Caco-2 (cell line): ENCODE measurements at regions of chr12 and their contacts with region 1.

Region 1: GRCh38 chr12:1939801-1940607 is 21.6 kb upstream of the CACNA2D4 start:
- DNase-seq: peak; percentile 84 to 91
- H3K4me3 ChIP-seq: no peak overlapping the region
- H3K4me3 Mint-ChIP-seq: no peak overlapping the region
- H3K27ac Mint-ChIP-seq: no peak overlapping the region
- H3K4me1 ChIP-seq: no peaks in the 10 kb centered on the region
- H3K4me1 Mint-ChIP-seq: no peaks in the 10 kb centered on the region
- H3K27me3 ChIP-seq: no peaks in the 10 kb centered on the region
- H3K27me3 Mint-ChIP-seq: no peaks in the 10 kb centered on the region
- CTCF ChIP-seq: peak; percentile 98 to 99

Region 2: GRCh38 chr12:1650260-1650977 is 289.6 kb before region 1 on chr12:
- CTCF ChIA-PET with region 1: interaction called, 25 read pairs
- POLR2A ChIA-PET with region 1: no interaction called
- intact Hi-C with region 1: loop called (anchors 5 kb)
- DNase-seq: no peak
- H3K4me3 ChIP-seq: no peak overlapping the region
- H3K4me3 Mint-ChIP-seq: no peak overlapping the region
- H3K27ac Mint-ChIP-seq: no peak overlapping the region
- H3K4me1 ChIP-seq: no peaks in the 10 kb centered on the region
- H3K4me1 Mint-ChIP-seq: no peaks in the 10 kb centered on the region
- H3K27me3 ChIP-seq: no peaks in the 10 kb centered on the region
- H3K27me3 Mint-ChIP-seq: no peaks in the 10 kb centered on the region
- CTCF ChIP-seq: no peak

Region 3: GRCh38 chr12:1698638-1699214 is 241.3 kb before region 1 on chr12:
- CTCF ChIA-PET with region 1: no interaction called
- POLR2A ChIA-PET with region 1: no interaction called
- intact Hi-C with region 1: loop called (anchors 5 kb)
- DNase-seq: peak; percentile 69 to 74
- H3K4me3 ChIP-seq: no peak overlapping the region
- H3K4me3 Mint-ChIP-seq: no peak overlapping the region
- H3K27ac Mint-ChIP-seq: peak overlapping the region; percentile 26
- H3K4me1 ChIP-seq: peaks cover 45% of the 10 kb centered on the region
- H3K4me1 Mint-ChIP-seq: peaks cover 25% of the 10 kb centered on the region
- H3K27me3 ChIP-seq: no peaks in the 10 kb centered on the region
- H3K27me3 Mint-ChIP-seq: no peaks in the 10 kb centered on the region
- CTCF ChIP-seq: peak in 1 of 2 experiments; percentile 46

Region 4: DNA sequence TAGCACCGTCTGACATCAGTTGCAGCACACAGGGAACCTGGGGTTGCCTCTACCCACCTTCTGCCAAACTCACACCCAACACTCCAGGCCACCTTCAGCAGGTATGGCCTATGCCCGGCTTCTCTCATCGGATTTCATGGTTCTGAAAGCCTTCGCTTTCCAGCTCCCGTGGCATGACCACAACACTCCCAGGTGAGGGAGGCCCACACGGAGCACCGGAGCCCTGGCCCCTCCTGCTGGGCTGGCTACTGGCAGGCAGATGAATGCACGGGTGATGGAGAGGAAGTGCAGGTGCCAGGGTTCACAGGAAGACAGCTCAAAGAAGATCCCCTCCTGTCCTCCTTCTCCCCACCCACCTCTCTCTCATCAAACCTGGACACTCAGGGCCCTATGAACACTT is 58.7 kb before region 1 on chr12:
- CTCF ChIA-PET with region 1: no interaction called
- POLR2A ChIA-PET with region 1: no interaction called
- intact Hi-C with region 1: no loop called
- DNase-seq: no peak
- H3K4me3 ChIP-seq: no peak overlapping the region
- H3K4me3 Mint-ChIP-seq: no peak overlapping the region
- H3K27ac Mint-ChIP-seq: no peak overlapping the region
- H3K4me1 ChIP-seq: peaks cover 6% of the 10 kb centered on the region; the same call in 1 of the 2 replicates
- H3K4me1 Mint-ChIP-seq: no peaks in the 10 kb centered on the region
- H3K27me3 ChIP-seq: no peaks in the 10 kb centered on the region
- H3K27me3 Mint-ChIP-seq: no peaks in the 10 kb centered on the region
- CTCF ChIP-seq: no peak

Region 5: GRCh38 chr12:1927751-1928351 is 12.2 kb before region 1 on chr12:
- CTCF ChIA-PET with region 1: interaction called, 12 read pairs
- POLR2A ChIA-PET with region 1: no interaction called
- intact Hi-C with region 1: no loop called
- DNase-seq: peak in 1 of 2 experiments; percentile 30
- H3K4me3 ChIP-seq: no peak overlapping the region
- H3K4me3 Mint-ChIP-seq: no peak overlapping the region
- H3K27ac Mint-ChIP-seq: no peak overlapping the region
- H3K4me1 ChIP-seq: no peaks in the 10 kb centered on the region
- H3K4me1 Mint-ChIP-seq: no peaks in the 10 kb centered on the region
- H3K27me3 ChIP-seq: no peaks in the 10 kb centered on the region
- H3K27me3 Mint-ChIP-seq: peaks cover 20% of the 10 kb centered on the region
- CTCF ChIP-seq: no peak

Region 6: DNA sequence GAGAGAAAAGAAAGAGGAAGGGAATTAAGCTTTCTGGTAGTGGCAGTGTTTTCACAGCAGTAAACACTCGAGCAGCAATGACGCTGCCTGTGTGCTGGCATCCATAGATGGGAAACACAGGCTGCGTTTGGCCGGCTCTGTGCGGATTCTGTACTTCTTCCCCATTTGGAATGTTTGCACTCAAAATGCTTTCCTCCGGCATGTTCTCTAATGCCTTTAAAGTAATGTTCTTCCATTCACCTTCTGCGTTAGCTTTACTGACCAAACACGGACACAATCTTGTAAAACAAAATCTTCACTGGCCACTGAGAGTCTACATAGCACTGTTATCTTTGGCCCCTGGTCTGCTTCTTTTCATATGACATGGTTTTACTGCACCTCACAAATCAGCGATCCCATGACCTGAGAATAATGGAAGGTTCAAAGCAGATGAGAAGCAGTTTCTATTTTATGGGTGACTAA is 32.9 kb after region 1 on chr12:
- CTCF ChIA-PET with region 1: no interaction called
- POLR2A ChIA-PET with region 1: no interaction called
- intact Hi-C with region 1: no loop called
- DNase-seq: peak in 1 of 2 experiments; percentile 4
- H3K4me3 ChIP-seq: no peak overlapping the region
- H3K4me3 Mint-ChIP-seq: peak overlapping the region; percentile 38
- H3K27ac Mint-ChIP-seq: no peak overlapping the region
- H3K4me1 ChIP-seq: peaks cover 12% of the 10 kb centered on the region; the same call in 1 of the 2 replicates
- H3K4me1 Mint-ChIP-seq: peaks cover 8% of the 10 kb centered on the region
- H3K27me3 ChIP-seq: no peaks in the 10 kb centered on the region
- H3K27me3 Mint-ChIP-seq: no peaks in the 10 kb centered on the region
- CTCF ChIP-seq: no peak

Region 7: DNA sequence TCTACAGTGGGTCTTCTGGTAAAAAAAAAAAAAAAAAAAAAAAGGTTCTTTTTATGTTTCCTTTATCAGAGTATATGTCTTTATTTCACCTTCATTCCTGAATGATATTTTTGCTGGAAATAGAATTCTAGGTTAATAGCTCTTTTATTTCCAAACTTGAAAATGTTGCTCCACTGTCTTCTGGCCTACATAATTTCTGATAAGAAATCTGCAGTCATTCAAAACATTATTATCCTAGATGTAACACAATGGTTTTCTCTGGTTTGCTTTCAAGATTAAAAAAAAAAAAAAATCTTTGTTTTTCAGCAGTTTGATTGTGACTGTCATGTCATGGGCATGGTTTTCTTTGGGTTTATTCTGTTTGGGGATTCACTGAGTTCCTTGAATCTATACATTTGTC is 44.8 kb after region 1 on chr12:
- CTCF ChIA-PET with region 1: no interaction called
- POLR2A ChIA-PET with region 1: no interaction called
- intact Hi-C with region 1: no loop called
- DNase-seq: no peak
- H3K4me3 ChIP-seq: no peak overlapping the region
- H3K4me3 Mint-ChIP-seq: no peak overlapping the region
- H3K27ac Mint-ChIP-seq: no peak overlapping the region
- H3K4me1 ChIP-seq: no peaks in the 10 kb centered on the region
- H3K4me1 Mint-ChIP-seq: no peaks in the 10 kb centered on the region
- H3K27me3 ChIP-seq: no peaks in the 10 kb centered on the region
- H3K27me3 Mint-ChIP-seq: no peaks in the 10 kb centered on the region
- CTCF ChIP-seq: no peak